Kidney (tissue), 22 donors: ENCODE measurements at regions of chr14 and their contacts with region 1.

Region 1: DNA sequence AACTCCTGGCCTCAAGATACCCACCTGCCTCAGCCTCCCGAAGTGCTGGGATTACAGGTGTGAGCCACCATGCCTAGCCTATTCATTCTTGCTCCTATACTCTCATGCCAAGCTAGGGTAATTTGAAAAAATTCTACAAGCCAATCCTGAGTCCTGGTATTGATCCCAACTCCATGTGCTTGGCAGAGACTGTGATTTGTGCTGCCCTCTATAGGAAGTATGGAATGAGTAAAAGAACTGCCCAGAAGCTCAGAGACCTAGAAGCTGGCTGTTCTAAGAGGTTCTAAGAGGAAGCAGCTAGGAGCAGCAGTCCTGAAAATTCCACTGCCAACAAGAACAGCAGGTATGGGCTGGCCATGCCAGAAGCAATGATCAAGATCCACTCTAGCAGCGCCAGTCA is 402.5 kb downstream of the PCNX1 start:
- DNase-seq: no peak
- H3K4me3 ChIP-seq: no peak overlapping the region
- H3K27ac ChIP-seq: no peak overlapping the region
- H3K4me1 ChIP-seq: no peaks in the 10 kb centered on the region
- H3K27me3 ChIP-seq: no peaks in the 10 kb centered on the region
- CTCF ChIP-seq: peak; percentile 3

Region 2: DNA sequence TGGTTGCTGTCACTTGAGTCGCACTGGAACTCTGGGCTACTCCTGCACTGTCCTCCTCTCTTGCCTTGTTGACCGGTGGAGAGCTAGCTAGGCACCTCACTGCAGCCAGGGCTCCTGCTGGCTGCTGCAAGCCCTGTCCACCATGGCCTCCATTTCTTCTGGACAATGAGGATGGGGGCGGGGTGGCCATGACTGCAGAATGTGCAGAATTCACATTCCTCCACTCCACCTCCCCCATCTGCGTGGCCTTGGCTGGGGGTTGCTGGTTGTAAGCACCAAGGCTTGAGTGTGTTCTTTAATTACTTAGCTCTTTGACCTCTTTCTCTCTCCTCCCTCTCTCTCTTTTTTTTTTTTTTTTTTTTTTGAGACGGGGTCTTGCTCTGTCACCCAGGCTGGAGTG is 154.0 kb before region 1 on chr14:
- intact Hi-C with region 1: loop called (anchors 10 kb)
- DNase-seq: peak in 4 of 5 donors; percentile 57 to 84 (median 72)
- H3K4me3 ChIP-seq: no peak overlapping the region
- H3K27ac ChIP-seq: no peak overlapping the region
- H3K4me1 ChIP-seq: peaks cover 0 to 2% (median 0%) of the 10 kb centered on the region in 3 donors
- H3K27me3 ChIP-seq: no peaks in the 10 kb centered on the region
- CTCF ChIP-seq: no peak